Natural killer cell (primary cell): ENCODE measurements at regions of chr6 and their contacts with region 1.

Region 1: GRCh38 chr6:43369174-43370022 is at the start of gene ZNF318:
- DNase-seq: peak; percentile 90 to 98
- ATAC-seq: peak; percentile 90 to 97 (median 92)
- H3K4me3 ChIP-seq: peak within 1 kb of the TSS; percentile 85
- H3K4me3 Mint-ChIP-seq: peak within 1 kb of the TSS; percentile 93
- H3K27ac ChIP-seq: peak within 1 kb of the TSS; percentile 78
- H3K27ac Mint-ChIP-seq: peak within 1 kb of the TSS; percentile 92 to 93
- H3K4me1 ChIP-seq: peaks cover 39% of the 10 kb centered on the region
- H3K4me1 Mint-ChIP-seq: peaks cover 53 to 60% of the 10 kb centered on the region in 2 donors
- H3K27me3 ChIP-seq: no peaks in the 10 kb centered on the region
- H3K27me3 Mint-ChIP-seq: no peaks in the 10 kb centered on the region
- CTCF ChIP-seq: no peak
- total RNA-seq, gene ZNF318: 34.6 to 45.9 (median 43.0) TPM

Region 2: DNA sequence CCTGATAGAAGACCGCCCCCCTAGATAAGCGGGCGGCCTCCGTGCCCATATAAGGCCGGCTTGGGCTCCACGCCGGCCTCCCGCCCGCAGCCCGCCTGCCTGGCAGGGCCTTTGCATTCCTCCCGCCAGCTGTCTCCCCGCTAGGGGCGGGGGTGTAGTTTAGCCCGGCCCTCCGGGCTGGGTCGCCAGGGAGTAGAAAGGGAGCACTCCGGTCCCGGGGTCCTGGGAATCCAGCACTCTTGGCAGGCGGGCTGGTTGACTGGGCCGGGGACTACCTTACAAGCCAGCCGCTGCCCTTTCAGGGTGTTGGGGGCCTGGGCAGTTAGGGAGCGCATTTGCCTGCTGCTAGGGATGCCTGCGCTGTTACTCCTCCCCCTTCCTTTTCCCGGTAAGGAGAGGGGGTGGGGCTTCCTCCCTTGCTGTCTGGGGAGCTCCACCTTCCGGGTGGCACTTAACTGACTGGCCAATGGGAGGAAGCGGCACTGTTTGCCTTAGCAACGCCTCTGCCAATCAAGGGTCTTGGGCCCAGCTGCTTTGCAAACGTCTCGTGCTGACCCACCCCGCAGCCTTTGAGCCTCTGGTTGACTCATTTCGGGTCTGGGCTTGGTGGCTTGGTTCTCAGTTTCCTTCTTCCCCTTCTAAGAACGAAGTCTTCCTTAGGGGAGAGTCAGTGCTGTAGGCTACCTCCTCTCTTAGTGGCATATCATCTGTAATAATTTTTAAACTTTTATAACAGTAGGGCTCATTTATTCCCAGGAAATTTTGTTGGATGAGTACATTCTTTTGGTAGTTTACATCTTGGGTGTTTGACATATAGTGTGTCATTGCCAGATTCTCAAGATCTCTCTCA is 194.9 kb before region 1 on chr6:
- intact Hi-C with region 1: loop called (anchors 5 kb)
- DNase-seq: peak; percentile 83 to 97
- ATAC-seq: peak; percentile 61 to 74 (median 67)
- H3K4me3 ChIP-seq: peak overlapping the region; percentile 6
- H3K4me3 Mint-ChIP-seq: peak overlapping the region; percentile 64
- H3K27ac ChIP-seq: peak overlapping the region; percentile 83
- H3K27ac Mint-ChIP-seq: peak overlapping the region; percentile 94 to 96
- H3K4me1 ChIP-seq: peaks cover 50% of the 10 kb centered on the region
- H3K4me1 Mint-ChIP-seq: peaks cover 33 to 52% of the 10 kb centered on the region in 2 donors
- H3K27me3 ChIP-seq: no peaks in the 10 kb centered on the region
- H3K27me3 Mint-ChIP-seq: no peaks in the 10 kb centered on the region
- CTCF ChIP-seq: no peak

Region 3: GRCh38 chr6:43286980-43287716 is 82.2 kb before region 1 on chr6:
- intact Hi-C with region 1: no loop called
- DNase-seq: no peak
- ATAC-seq: no peak
- H3K4me3 ChIP-seq: no peak overlapping the region
- H3K4me3 Mint-ChIP-seq: no peak overlapping the region
- H3K27ac ChIP-seq: no peak overlapping the region
- H3K27ac Mint-ChIP-seq: no peak overlapping the region
- H3K4me1 ChIP-seq: no peaks in the 10 kb centered on the region
- H3K4me1 Mint-ChIP-seq: no peaks in the 10 kb centered on the region
- H3K27me3 ChIP-seq: peaks cover 3% of the 10 kb centered on the region
- H3K27me3 Mint-ChIP-seq: peaks cover 5 to 26% of the 10 kb centered on the region in 2 donors
- CTCF ChIP-seq: no peak

Region 4: DNA sequence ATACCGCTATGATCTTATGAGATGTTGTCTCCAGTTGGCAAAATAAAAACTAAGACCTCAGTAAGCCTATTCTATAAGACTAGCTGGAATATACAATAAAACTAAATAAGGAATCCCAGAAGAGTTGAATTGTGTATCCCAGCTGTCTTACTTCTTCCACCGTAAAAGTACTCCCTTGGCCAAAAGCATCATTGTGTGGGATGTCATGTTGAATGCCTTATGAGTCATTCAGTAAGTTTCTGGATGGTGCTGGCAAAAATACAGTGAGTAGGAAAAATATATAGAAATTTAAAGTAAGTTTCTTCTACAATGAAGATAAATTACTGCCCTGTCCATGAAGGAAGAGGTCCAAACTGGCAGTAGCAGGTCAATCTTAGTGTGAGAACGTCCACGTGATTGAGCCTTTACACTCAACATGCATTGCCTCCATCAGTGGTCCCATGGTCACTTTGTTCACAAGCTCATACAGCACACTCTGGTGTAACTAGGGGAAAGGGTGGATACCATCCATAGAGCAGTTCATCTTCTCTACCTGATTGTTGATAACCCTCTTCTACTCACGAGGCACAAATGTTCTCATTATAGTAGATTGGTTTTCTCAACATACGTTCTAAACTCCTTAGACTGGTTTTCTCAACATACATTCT is 13.7 kb after region 1 on chr6:
- intact Hi-C with region 1: loop called (anchors 1 kb)
- DNase-seq: peak in 1 of 2 donors; percentile 32
- ATAC-seq: peak in 2 of 3 donors; percentile 17 to 27
- H3K4me3 ChIP-seq: peak overlapping the region; percentile 12
- H3K4me3 Mint-ChIP-seq: peak overlapping the region; percentile 76
- H3K27ac ChIP-seq: peak overlapping the region; percentile 94
- H3K27ac Mint-ChIP-seq: peak overlapping the region; percentile 85 to 94
- H3K4me1 ChIP-seq: peaks cover 46% of the 10 kb centered on the region
- H3K4me1 Mint-ChIP-seq: peaks cover 68 to 69% of the 10 kb centered on the region in 2 donors
- H3K27me3 ChIP-seq: peaks cover 2% of the 10 kb centered on the region
- H3K27me3 Mint-ChIP-seq: no peaks in the 10 kb centered on the region
- CTCF ChIP-seq: no peak

Region 5: GRCh38 chr6:43427406-43428111 is 58.2 kb after region 1 on chr6 and contains the start of gene ABCC10:
- intact Hi-C with region 1: loop called (anchors 1 kb)
- DNase-seq: peak; percentile 88 to 98
- ATAC-seq: peak; percentile 94 to 98 (median 94)
- H3K4me3 ChIP-seq: peak within 1 kb of the TSS; percentile 77
- H3K4me3 Mint-ChIP-seq: peak within 1 kb of the TSS; percentile 97
- H3K27ac ChIP-seq: peak within 1 kb of the TSS; percentile 70
- H3K27ac Mint-ChIP-seq: peak within 1 kb of the TSS; percentile 91 to 92
- H3K4me1 ChIP-seq: peaks cover 27% of the 10 kb centered on the region
- H3K4me1 Mint-ChIP-seq: peaks cover 19 to 29% of the 10 kb centered on the region in 2 donors
- H3K27me3 ChIP-seq: no peaks in the 10 kb centered on the region
- H3K27me3 Mint-ChIP-seq: no peaks in the 10 kb centered on the region
- CTCF ChIP-seq: peak; percentile 12
- total RNA-seq, gene ABCC10: 74.6 to 90.5 (median 81.9) TPM

Region 6: DNA sequence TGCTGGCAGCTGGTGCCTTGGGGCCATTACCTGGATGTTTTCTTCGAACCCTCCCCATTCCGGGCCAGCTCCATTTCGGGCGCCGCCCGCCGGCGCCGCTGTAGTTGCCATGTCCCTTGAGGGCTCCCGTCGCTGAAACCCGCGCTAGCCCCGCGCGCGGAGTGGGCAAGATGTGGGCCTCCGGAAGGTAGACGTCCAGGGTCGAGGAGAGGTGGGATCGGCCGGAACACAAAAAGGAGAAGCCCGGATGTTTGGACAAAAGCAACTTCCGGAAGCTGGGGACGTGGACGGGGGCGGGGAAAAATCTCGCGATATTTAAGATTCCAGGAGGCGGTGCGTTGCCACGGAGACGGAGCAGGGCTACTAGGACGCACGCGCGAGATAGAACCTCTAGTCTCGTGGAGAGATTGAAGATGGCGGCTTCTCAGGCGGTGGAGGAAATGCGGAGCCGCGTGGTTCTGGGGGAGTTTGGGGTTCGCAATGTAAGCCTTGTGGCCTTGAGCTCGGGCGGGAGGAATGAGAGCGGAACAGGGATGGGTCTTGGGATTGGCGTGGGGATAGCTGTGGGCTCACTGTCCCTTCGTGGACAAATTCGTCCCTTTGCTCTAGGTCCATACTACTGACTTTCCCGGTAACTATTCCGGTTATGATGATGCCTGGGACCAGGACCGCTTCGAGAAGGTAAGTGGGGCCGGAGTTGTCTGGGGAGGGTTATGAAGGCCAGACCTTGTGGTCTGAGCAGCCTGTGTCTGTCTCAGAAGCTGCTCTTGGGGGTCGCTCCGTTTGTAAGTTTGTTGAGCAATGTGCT is 147.5 kb after region 1 on chr6 and contains the starts of genes POLR1C and YIPF3:
- intact Hi-C with region 1: loop called (anchors 10 kb)
- DNase-seq: peak; percentile 95 to 99
- ATAC-seq: peak; percentile 94 to 95 (median 95)
- H3K4me3 ChIP-seq: peak within 1 kb of the TSS; percentile 86
- H3K4me3 Mint-ChIP-seq: no peak within 1 kb of the TSS
- H3K27ac ChIP-seq: peak within 1 kb of the TSS; percentile 62
- H3K27ac Mint-ChIP-seq: no peak within 1 kb of the TSS
- H3K4me1 ChIP-seq: peaks cover 26% of the 10 kb centered on the region
- H3K4me1 Mint-ChIP-seq: peaks cover 1 to 14% of the 10 kb centered on the region in 2 donors
- H3K27me3 ChIP-seq: no peaks in the 10 kb centered on the region
- H3K27me3 Mint-ChIP-seq: no peaks in the 10 kb centered on the region
- CTCF ChIP-seq: no peak
- total RNA-seq, gene POLR1C: 22.3 to 29.3 (median 25.8) TPM
- total RNA-seq, gene YIPF3: 59.3 to 78.4 (median 70.0) TPM

Region 7: GRCh38 chr6:43629505-43630300 is 260.3 kb after region 1 on chr6:
- intact Hi-C with region 1: loop called (anchors 5 kb)
- DNase-seq: peak; percentile 77 to 95
- ATAC-seq: peak; percentile 58 to 79 (median 64)
- H3K4me3 ChIP-seq: peak overlapping the region; percentile 76
- H3K4me3 Mint-ChIP-seq: peak overlapping the region; percentile 97
- H3K27ac ChIP-seq: peak overlapping the region; percentile 73
- H3K27ac Mint-ChIP-seq: peak overlapping the region; percentile 92 to 96
- H3K4me1 ChIP-seq: peaks cover 37% of the 10 kb centered on the region
- H3K4me1 Mint-ChIP-seq: peaks cover 23 to 43% of the 10 kb centered on the region in 2 donors
- H3K27me3 ChIP-seq: no peaks in the 10 kb centered on the region
- H3K27me3 Mint-ChIP-seq: no peaks in the 10 kb centered on the region
- CTCF ChIP-seq: no peak

Region 8: GRCh38 chr6:43838276-43839036 is 469.1 kb after region 1 on chr6:
- intact Hi-C with region 1: no loop called
- DNase-seq: peak in 1 of 2 donors; percentile 11
- ATAC-seq: peak; percentile 54 to 62 (median 57)
- H3K4me3 ChIP-seq: no peak overlapping the region
- H3K4me3 Mint-ChIP-seq: no peak overlapping the region
- H3K27ac ChIP-seq: no peak overlapping the region
- H3K27ac Mint-ChIP-seq: no peak overlapping the region
- H3K4me1 ChIP-seq: no peaks in the 10 kb centered on the region
- H3K4me1 Mint-ChIP-seq: no peaks in the 10 kb centered on the region
- H3K27me3 ChIP-seq: no peaks in the 10 kb centered on the region
- H3K27me3 Mint-ChIP-seq: peaks cover 0 to under 1% of the 10 kb centered on the region in 2 donors
- CTCF ChIP-seq: peak; percentile 22